Body of pancreas (tissue), 4 donors: ENCODE measurements at regions of chr11 and their contacts with region 1.

Region 1: GRCh38 chr11:133605482-133605881 is 73.2 kb upstream of the OPCML start:
- DNase-seq: no peak
- ATAC-seq: no peak
- H3K4me3 ChIP-seq: no peak overlapping the region
- H3K27ac ChIP-seq: no peak overlapping the region
- H3K4me1 ChIP-seq: no peaks in the 10 kb centered on the region
- H3K27me3 ChIP-seq: no peaks in the 10 kb centered on the region
- CTCF ChIP-seq: no peak
- POLR2A ChIP-seq: no peak

Region 2: GRCh38 chr11:133306019-133306418 is 299.5 kb before region 1 on chr11:
- intact Hi-C with region 1: loop called (anchors 5 kb)
- DNase-seq: no peak
- ATAC-seq: no peak
- H3K4me3 ChIP-seq: no peak overlapping the region
- H3K27ac ChIP-seq: no peak overlapping the region
- H3K4me1 ChIP-seq: no peaks in the 10 kb centered on the region
- H3K27me3 ChIP-seq: no peaks in the 10 kb centered on the region
- CTCF ChIP-seq: no peak
- POLR2A ChIP-seq: no peak

Region 3: GRCh38 chr11:133570376-133570775 is 35.1 kb before region 1 on chr11:
- intact Hi-C with region 1: no loop called
- DNase-seq: no peak
- ATAC-seq: no peak
- H3K4me3 ChIP-seq: no peak overlapping the region
- H3K27ac ChIP-seq: no peak overlapping the region
- H3K4me1 ChIP-seq: no peaks in the 10 kb centered on the region
- H3K27me3 ChIP-seq: no peaks in the 10 kb centered on the region
- CTCF ChIP-seq: no peak
- POLR2A ChIP-seq: no peak